ENCODE measurements at regions of chr9 and their contacts with region 1.

Region 1: GRCh38 chr9:116791326-116791725 is 104.2 kb downstream of the TRIM32 start:
- DNase-seq: no peak
- H3K4me3 ChIP-seq: no peak overlapping the region
- CTCF ChIP-seq: no peak

Region 2: DNA sequence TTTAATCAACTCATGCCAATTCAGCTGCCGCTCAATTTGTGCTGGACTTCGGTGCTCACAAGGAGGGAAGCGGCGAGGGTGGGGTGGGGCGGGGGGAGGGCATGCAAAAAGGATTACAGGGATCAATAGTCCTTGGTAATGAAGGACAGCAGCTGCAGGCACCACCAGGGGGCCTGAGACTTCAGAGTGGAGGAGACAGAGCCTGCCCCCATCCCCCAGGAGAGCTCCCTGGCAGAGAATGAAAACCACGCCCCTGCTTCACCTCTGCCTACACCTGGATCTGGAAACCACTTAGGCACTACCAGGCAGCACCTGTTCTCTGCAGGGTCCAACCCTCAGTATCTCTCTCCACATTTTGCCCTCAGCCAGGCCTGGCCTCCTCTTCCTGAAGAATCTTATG is 51.3 kb after region 1 on chr9:
- in situ Hi-C with region 1: no loop called
- DNase-seq: no peak
- H3K4me3 ChIP-seq: no peak overlapping the region
- CTCF ChIP-seq: no peak

Region 3: GRCh38 chr9:116883676-116884075 is 92.3 kb after region 1 on chr9:
- in situ Hi-C with region 1: loop called (anchors 5 kb)
- DNase-seq: no peak
- H3K4me3 ChIP-seq: no peak overlapping the region
- CTCF ChIP-seq: no peak

Measured in astrocyte of the cerebellum (primary cell).